ENCODE measurements at regions of chr15 and their contacts with region 1.

Region 1: DNA sequence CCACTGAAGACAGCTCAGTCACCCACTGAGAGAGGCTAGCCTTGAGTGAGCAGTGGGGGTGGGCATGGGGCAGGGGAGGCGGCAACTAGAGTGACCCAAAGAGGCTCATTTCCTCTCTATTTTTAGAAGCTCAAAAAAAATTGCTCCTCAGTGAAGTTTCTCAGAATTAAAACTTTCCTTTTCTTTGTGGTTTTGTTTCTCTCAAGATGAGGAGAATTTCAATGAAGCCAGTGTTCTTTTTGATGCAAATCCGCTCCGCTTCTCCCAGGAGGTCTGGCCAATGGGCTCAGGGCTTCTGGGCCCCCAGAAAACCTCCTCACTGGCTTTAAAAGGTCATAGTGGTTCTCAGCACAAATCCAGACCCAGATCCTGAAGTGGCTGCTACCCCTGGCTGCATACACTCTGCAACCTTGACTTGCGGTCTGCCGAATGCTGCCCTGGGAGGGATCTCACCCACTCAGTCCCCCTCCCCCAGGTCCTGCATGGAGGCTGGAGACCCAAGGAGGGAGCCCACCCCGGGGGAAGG is at the start of gene ACSBG1:
- DNase-seq: no peak
- ATAC-seq: no peak
- H3K4me3 ChIP-seq: no peak within 1 kb of the TSS
- H3K27ac ChIP-seq: no peak within 1 kb of the TSS
- H3K4me1 ChIP-seq: no peaks in the 10 kb centered on the region
- H3K27me3 ChIP-seq: no peaks in the 10 kb centered on the region
- CTCF ChIP-seq: no peak
- POLR2A ChIP-seq: no peak
- total RNA-seq, gene ACSBG1: 0.05 to 1.2 (median 0.06) TPM in 4 of 9 donors, not detected in the others

Region 2: DNA sequence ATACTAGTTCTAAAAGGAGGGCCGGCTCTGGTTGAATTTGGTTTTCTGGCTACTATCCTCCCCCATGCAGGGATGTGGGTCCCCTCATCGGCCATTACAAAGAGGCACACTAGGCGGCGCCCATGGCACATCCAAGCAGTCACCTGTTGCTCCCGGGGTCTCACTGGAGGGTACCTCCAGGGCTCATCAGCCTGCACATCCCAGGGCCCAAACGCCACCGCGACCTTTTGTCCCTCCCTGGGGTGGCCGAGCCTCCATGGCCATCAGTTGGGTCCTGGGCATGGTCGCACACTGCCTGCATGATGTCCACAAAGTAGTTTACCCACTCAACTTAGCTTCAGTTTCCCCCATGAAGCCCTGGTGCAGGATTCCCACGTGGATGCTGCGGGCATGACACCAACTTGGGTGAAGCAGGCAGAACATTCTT is 57.1 kb before region 1 on chr15:
- intact Hi-C with region 1: loop called in 1 of 10 experiments (anchors 5 kb)
- DNase-seq: peak in 3 of 5 donors; percentile 43 to 53 (median 43)
- ATAC-seq: peak in 3 of 4 donors; percentile 37 to 53 (median 51)
- H3K4me3 ChIP-seq: no peak overlapping the region
- H3K27ac ChIP-seq: no peak overlapping the region
- H3K4me1 ChIP-seq: peaks cover 0 to 7% (median 0%) of the 10 kb centered on the region in 12 donors
- H3K27me3 ChIP-seq: no peaks in the 10 kb centered on the region
- CTCF ChIP-seq: peak; percentile 41 to 72 (median 62)
- POLR2A ChIP-seq: no peak

Region 3: GRCh38 chr15:78195735-78196201 is 38.8 kb before region 1 on chr15:
- intact Hi-C with region 1: loop called in 4 of 10 experiments (anchors 5 kb)
- DNase-seq: peak in 2 of 5 donors; percentile 28 to 67
- ATAC-seq: peak; percentile 79 to 86 (median 80)
- H3K4me3 ChIP-seq: no peak overlapping the region
- H3K27ac ChIP-seq: no peak overlapping the region
- H3K4me1 ChIP-seq: no peaks in the 10 kb centered on the region
- H3K27me3 ChIP-seq: no peaks in the 10 kb centered on the region
- CTCF ChIP-seq: peak; percentile 51 to 74 (median 64)
- POLR2A ChIP-seq: no peak

Region 4: GRCh38 chr15:78276064-78276943 is 41.7 kb after region 1 on chr15:
- intact Hi-C with region 1: no loop called
- DNase-seq: no peak
- ATAC-seq: peak in 1 of 4 donors; percentile 23
- H3K4me3 ChIP-seq: no peak overlapping the region
- H3K27ac ChIP-seq: no peak overlapping the region
- H3K4me1 ChIP-seq: peaks cover 0 to 11% (median 0%) of the 10 kb centered on the region in 12 donors
- H3K27me3 ChIP-seq: no peaks in the 10 kb centered on the region
- CTCF ChIP-seq: no peak
- POLR2A ChIP-seq: no peak

Measured in heart left ventricle (tissue), 16 donors.